K562 (cell line): ENCODE measurements at regions of chr1 and their contacts with region 1.

Region 1: GRCh38 chr1:227437495-227438008 is 119.3 kb upstream of the CDC42BPA start:
- DNase-seq: peak; percentile 47 to 83 (median 65)
- ATAC-seq: peak; percentile 88
- H3K4me3 ChIP-seq: 0 out of 2 replicates have a peak overlapping the region, but pooled peaks have one; percentile 9
- H3K27ac ChIP-seq: peak overlapping the region; percentile 43; the same call in 1 of the 3 replicates
- H3K4me1 ChIP-seq: peaks cover 4 to 22% of the 10 kb centered on the region in 2 experiments; a peak in 4 of 5 replicates
- H3K27me3 ChIP-seq: no peaks in the 10 kb centered on the region
- CTCF ChIP-seq: peak; percentile 59 to 82 (median 67); a peak in 5 of 6 replicates
- EP300 ChIP-seq: no peak
- POLR2A ChIP-seq: no peak
- RAD21 ChIP-seq: peak; percentile 95 to 96

Region 2: DNA sequence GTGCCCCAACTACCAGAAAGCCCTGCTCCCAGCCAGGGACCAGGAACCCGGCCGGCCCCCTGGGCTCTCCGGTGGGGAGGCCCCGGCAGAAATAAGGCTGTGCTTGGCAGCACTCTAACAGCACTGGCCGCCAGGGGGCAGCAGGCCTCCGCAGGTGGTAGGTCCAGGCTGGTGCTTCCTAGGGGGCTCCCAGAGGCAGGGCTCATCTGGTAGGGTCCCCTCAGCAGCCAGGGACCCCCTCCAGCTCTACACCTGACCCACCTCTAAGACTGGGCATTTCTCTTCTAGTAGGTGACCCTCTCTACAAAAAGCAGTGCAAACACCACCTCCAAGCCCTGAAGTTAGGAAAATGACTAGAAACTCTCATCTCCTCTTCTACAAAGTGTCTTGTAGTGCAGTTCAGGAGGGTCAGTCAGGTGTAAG is 803.4 kb before region 1 on chr1:
- CTCF ChIA-PET with region 1: interaction called, 5 read pairs
- POLR2A ChIA-PET with region 1: no interaction called
- in situ Hi-C with region 1: loop called (anchors 10 kb)
- intact Hi-C with region 1: loop called (anchors 1 kb)
- DNase-seq: peak; percentile 83 to 87 (median 84)
- ATAC-seq: peak; percentile 94
- H3K4me3 ChIP-seq: no peak overlapping the region
- H3K27ac ChIP-seq: no peak overlapping the region
- H3K4me1 ChIP-seq: peaks cover 0 to 17% of the 10 kb centered on the region in 2 experiments; a peak in 2 of 5 replicates
- H3K27me3 ChIP-seq: peaks cover 22 to 79% of the 10 kb centered on the region in 2 experiments
- CTCF ChIP-seq: peak; percentile 93 to 96 (median 95)
- EP300 ChIP-seq: no peak
- POLR2A ChIP-seq: no peak
- RAD21 ChIP-seq: peak; percentile 93 to 98

Region 3: GRCh38 chr1:226912587-226913176 is 524.9 kb before region 1 on chr1:
- CTCF ChIA-PET with region 1: interaction called, 12 read pairs
- POLR2A ChIA-PET with region 1: no interaction called
- in situ Hi-C with region 1: loop called (anchors 10 kb)
- intact Hi-C with region 1: loop called (anchors 1 kb)
- DNase-seq: peak; percentile 64 to 81 (median 73)
- ATAC-seq: peak; percentile 98
- H3K4me3 ChIP-seq: no peak overlapping the region
- H3K27ac ChIP-seq: no peak overlapping the region
- H3K4me1 ChIP-seq: peaks cover 0 to 6% of the 10 kb centered on the region in 2 experiments; a peak in 2 of 5 replicates
- H3K27me3 ChIP-seq: no peaks in the 10 kb centered on the region
- CTCF ChIP-seq: peak; percentile 81 to 93 (median 82)
- EP300 ChIP-seq: no peak
- POLR2A ChIP-seq: no peak
- RAD21 ChIP-seq: peak; percentile 71 to 90

Region 4: GRCh38 chr1:226990133-226990716 is 447.3 kb before region 1 on chr1:
- CTCF ChIA-PET with region 1: no interaction called
- POLR2A ChIA-PET with region 1: no interaction called
- in situ Hi-C with region 1: no loop called
- intact Hi-C with region 1: loop called (anchors 1 kb)
- DNase-seq: peak in 3 of 4 experiments; percentile 57 to 88 (median 85)
- ATAC-seq: peak; percentile 93
- H3K4me3 ChIP-seq: no peak overlapping the region
- H3K27ac ChIP-seq: peak overlapping the region; percentile 77
- H3K4me1 ChIP-seq: peaks cover 23 to 29% of the 10 kb centered on the region in 2 experiments
- H3K27me3 ChIP-seq: no peaks in the 10 kb centered on the region
- CTCF ChIP-seq: no peak
- EP300 ChIP-seq: peak; percentile 68
- POLR2A ChIP-seq: 0 out of 2 replicates have a peak, but pooled peaks have one; percentile 23
- RAD21 ChIP-seq: peak in 1 of 2 experiments; percentile 32; a peak in 1 of 4 replicates

Region 5: GRCh38 chr1:227131193-227131592 is 306.4 kb before region 1 on chr1:
- CTCF ChIA-PET with region 1: no interaction called
- POLR2A ChIA-PET with region 1: no interaction called
- in situ Hi-C with region 1: no loop called
- intact Hi-C with region 1: loop called (anchors 5 kb)
- DNase-seq: peak in 2 of 4 experiments; percentile 21 to 29
- ATAC-seq: peak; percentile 69
- H3K4me3 ChIP-seq: no peak overlapping the region
- H3K27ac ChIP-seq: no peak overlapping the region
- H3K4me1 ChIP-seq: peaks cover 0 to 4% of the 10 kb centered on the region in 2 experiments; a peak in 1 of 5 replicates
- H3K27me3 ChIP-seq: no peaks in the 10 kb centered on the region
- CTCF ChIP-seq: peak in 2 of 3 experiments; percentile 50 to 63; a peak in 4 of 6 replicates
- EP300 ChIP-seq: no peak
- POLR2A ChIP-seq: no peak
- RAD21 ChIP-seq: peak in 1 of 2 experiments; percentile 46; a peak in 2 of 4 replicates

Region 6: GRCh38 chr1:227234998-227235405 is 202.6 kb before region 1 on chr1:
- CTCF ChIA-PET with region 1: interaction called, 8 read pairs
- POLR2A ChIA-PET with region 1: no interaction called
- in situ Hi-C with region 1: loop called (anchors 10 kb)
- intact Hi-C with region 1: loop called (anchors 1 kb)
- DNase-seq: peak; percentile 69 to 90 (median 82)
- ATAC-seq: peak; percentile 98
- H3K4me3 ChIP-seq: no peak overlapping the region
- H3K27ac ChIP-seq: peak overlapping the region; percentile 5; the same call in 1 of the 3 replicates
- H3K4me1 ChIP-seq: peaks cover 5 to 7% of the 10 kb centered on the region in 2 experiments; a peak in 4 of 5 replicates
- H3K27me3 ChIP-seq: no peaks in the 10 kb centered on the region
- CTCF ChIP-seq: peak; percentile 85 to 89 (median 88)
- EP300 ChIP-seq: peak; percentile 68
- POLR2A ChIP-seq: no peak
- RAD21 ChIP-seq: peak; percentile 55 to 90

Region 7: DNA sequence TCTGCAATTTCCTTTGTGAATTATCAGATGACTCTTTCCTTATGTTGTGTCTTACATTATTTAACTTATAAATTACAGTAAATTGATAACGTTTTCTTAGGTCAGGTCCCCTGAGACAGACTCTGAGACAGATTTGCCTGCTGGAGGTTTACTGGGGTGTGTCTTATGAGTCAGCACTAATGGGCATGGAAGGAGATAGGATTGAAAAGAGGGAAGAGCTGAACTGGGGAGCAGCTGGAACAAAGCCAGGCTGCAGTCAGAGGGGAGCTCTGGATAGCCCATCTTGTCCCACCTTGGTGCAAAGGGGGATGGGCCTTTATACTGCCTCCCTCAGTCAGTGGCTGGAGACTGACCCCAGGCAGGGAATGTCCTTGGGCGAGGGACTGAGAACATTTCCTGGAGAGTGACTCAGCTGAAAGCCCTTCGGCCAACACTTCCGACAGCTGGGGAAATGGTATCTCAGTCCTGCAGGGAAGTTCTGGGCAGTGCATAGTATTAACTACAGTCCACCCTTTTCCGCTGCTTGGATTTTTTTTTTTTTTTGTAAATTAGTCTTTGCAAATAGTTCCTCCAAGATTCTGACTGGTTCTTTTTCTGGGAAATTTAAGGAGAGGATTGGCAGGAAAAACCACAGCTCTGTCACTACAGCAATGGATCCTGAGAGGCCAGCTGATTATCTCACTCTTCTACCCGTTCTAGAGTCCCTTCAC is 80.2 kb before region 1 on chr1:
- CTCF ChIA-PET with region 1: no interaction called
- POLR2A ChIA-PET with region 1: no interaction called
- in situ Hi-C with region 1: no loop called
- intact Hi-C with region 1: loop called (anchors 1 kb)
- DNase-seq: peak; percentile 85 to 96 (median 90)
- ATAC-seq: peak; percentile 97
- H3K4me3 ChIP-seq: peak overlapping the region; percentile 13; the same call in 1 of the 2 replicates
- H3K27ac ChIP-seq: peak overlapping the region; percentile 93
- H3K4me1 ChIP-seq: peaks cover 20 to 29% of the 10 kb centered on the region in 2 experiments
- H3K27me3 ChIP-seq: no peaks in the 10 kb centered on the region
- CTCF ChIP-seq: no peak; a peak in 1 of 6 replicates
- EP300 ChIP-seq: peak; percentile 91
- POLR2A ChIP-seq: peak; percentile 46
- RAD21 ChIP-seq: peak; percentile 15 to 44